ENCODE measurements at regions of chr9 and their contacts with region 1.

Region 1: DNA sequence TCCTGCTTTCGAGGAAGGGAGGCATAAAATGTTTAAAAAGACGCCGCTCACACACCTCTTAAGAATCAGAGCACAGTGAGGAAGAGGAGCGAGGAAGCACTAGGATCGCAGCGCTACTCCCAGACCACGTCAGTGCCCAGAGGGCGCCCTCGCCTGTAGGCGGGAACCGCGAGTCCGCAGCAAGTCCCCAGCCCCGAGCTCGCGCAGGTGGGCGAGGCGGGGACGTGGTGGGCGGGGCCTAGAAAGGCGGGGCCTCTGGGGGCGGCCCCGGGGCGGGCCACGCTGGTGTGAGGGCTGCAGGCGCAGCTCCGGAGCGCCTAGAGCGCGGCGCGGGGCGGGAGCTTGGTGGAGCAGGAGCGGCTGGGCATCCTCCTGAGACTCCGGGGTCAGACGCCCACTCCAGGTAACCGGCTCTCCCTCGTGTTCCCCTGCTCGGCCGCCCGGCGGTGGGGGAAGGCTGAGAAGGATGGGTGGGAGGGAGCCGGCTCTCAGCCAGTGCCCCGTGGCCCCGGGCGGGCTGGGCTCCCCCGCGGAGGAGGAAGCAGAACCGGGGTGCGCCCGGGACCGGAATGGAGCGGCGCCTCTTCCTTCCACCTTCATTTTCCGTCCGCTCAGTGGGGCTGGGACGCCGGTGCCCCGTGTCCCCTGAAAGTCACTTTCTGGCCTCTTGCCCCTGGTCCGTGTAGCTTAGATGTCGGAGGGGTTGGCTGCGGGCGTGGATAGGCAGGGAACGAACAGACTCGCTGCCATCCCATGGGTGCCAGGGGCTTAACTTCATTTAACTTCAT is at the start of gene GCNT1:
- DNase-seq: peak; percentile 98
- ATAC-seq: peak; percentile 96
- H3K4me3 Mint-ChIP-seq: peak within 1 kb of the TSS; percentile 86
- H3K27ac Mint-ChIP-seq: no peak within 1 kb of the TSS; the same call in 1 of the 2 replicates
- H3K4me1 Mint-ChIP-seq: peaks cover 22% of the 10 kb centered on the region
- H3K27me3 Mint-ChIP-seq: peaks cover 17% of the 10 kb centered on the region
- CTCF ChIP-seq: no peak
- total RNA-seq, gene GCNT1: 15.6 to 17.2 TPM (median 16.1 TPM) in 3 replicates

Region 2: GRCh38 chr9:76448501-76448900 is 10.6 kb before region 1 on chr9:
- CTCF ChIA-PET with region 1: interaction called, 11 read pairs
- POLR2A ChIA-PET with region 1: no interaction called
- DNase-seq: no peak
- ATAC-seq: no peak
- H3K4me3 Mint-ChIP-seq: no peak overlapping the region
- H3K27ac Mint-ChIP-seq: no peak overlapping the region
- H3K4me1 Mint-ChIP-seq: peaks cover 20% of the 10 kb centered on the region
- H3K27me3 Mint-ChIP-seq: no peaks in the 10 kb centered on the region; the same call in 1 of the 2 replicates
- CTCF ChIP-seq: no peak

Region 3: DNA sequence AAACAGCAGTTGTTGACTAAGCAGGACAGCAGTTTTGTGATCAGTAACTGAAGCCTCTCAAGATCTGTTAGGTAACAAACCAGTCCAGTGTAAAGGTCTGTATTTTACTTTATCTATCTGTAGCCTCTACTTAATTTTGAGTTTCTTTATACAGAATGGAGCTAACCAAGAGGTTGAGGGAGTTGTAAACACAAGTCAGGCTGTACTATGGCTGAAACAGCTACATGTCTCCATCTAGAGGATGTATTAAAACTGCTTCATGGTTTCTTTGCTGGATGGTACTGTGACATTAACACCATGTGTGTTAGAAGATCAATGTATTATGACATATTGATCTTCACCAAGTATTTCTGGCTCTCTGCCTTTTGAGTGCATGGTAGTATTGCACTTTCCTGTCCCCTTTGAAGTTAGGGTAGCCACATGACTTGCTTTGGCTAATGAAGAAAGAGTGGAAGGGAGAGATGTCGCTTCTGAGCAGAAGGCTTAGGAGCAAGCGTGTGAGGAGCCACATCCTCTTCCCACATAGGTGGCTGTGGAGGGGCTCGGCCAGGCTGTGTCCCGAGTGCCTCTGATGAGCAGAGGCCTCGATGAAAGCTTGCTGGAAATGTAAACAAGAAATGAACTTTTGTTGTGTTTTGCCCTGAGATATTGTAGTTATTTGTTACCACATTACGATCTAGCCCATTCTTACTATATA is 199.6 kb after region 1 on chr9:
- CTCF ChIA-PET with region 1: interaction called, 14 read pairs
- POLR2A ChIA-PET with region 1: no interaction called
- DNase-seq: no peak
- ATAC-seq: peak; percentile 91
- H3K4me3 Mint-ChIP-seq: no peak overlapping the region
- H3K27ac Mint-ChIP-seq: peak overlapping the region; percentile 58; the same call in 1 of the 2 replicates
- H3K4me1 Mint-ChIP-seq: peaks cover 21% of the 10 kb centered on the region
- H3K27me3 Mint-ChIP-seq: no peaks in the 10 kb centered on the region
- CTCF ChIP-seq: no peak